Activated CD4-positive, alpha-beta memory T cell treated with anti-CD3 and anti-CD28 coated beads for 36 hours (primary cell): ENCODE measurements at regions of chr19 and their contacts with region 1.

Region 1: GRCh38 chr19:45862564-45863334 is at the start of gene SYMPK:
- DNase-seq: peak; percentile 99
- H3K4me3 Mint-ChIP-seq: peak within 1 kb of the TSS; percentile 94
- H3K27ac Mint-ChIP-seq: peak within 1 kb of the TSS; percentile 93
- H3K4me1 Mint-ChIP-seq: peaks cover 23% of the 10 kb centered on the region
- H3K27me3 Mint-ChIP-seq: peaks cover 20% of the 10 kb centered on the region
- total RNA-seq, gene SYMPK: 87.8 to 91.6 TPM

Region 2: GRCh38 chr19:45584332-45585157 is 278.2 kb before region 1 on chr19 and contains the start of gene OPA3:
- CTCF ChIA-PET with region 1: no interaction called
- POLR2A ChIA-PET with region 1: no interaction called
- intact Hi-C with region 1: loop called (anchors 10 kb)
- DNase-seq: peak; percentile 100
- H3K4me3 Mint-ChIP-seq: peak within 1 kb of the TSS; percentile 96
- H3K27ac Mint-ChIP-seq: peak within 1 kb of the TSS; percentile 97
- H3K4me1 Mint-ChIP-seq: peaks cover 11% of the 10 kb centered on the region
- H3K27me3 Mint-ChIP-seq: peaks cover 1% of the 10 kb centered on the region
- total RNA-seq, gene OPA3: 10.8 to 11.0 TPM

Region 3: DNA sequence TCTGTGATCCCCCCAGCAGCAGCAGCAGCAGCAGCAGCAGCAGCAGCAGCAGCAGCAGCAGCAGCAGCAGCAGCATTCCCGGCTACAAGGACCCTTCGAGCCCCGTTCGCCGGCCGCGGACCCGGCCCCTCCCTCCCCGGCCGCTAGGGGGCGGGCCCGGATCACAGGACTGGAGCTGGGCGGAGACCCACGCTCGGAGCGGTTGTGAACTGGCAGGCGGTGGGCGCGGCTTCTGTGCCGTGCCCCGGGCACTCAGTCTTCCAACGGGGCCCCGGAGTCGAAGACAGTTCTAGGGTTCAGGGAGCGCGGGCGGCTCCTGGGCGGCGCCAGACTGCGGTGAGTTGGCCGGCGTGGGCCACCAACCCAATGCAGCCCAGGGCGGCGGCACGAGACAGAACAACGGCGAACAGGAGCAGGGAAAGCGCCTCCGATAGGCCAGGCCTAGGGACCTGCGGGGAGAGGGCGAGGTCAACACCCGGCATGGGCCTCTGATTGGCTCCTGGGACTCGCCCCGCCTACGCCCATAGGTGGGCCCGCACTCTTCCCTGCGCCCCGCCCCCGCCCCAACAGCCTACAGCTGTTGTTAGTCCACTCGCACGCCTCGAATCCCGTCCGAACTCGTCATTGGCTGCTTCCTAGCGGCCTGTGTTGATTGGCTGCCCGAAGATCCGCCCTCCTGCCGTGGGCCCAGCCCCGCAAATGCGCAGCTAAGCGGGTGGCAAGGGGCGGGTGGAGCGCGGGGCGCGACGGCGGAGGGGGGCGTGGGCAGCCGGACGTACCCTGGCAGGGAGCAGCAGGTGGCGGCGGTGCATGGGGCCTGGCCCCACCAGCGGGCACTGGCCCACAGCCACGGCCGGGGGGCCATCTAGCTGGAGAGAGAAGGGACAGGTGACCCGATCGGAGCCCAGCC is 92.3 kb before region 1 on chr19:
- CTCF ChIA-PET with region 1: interaction called, 10 read pairs
- POLR2A ChIA-PET with region 1: no interaction called
- intact Hi-C with region 1: loop called (anchors 1 kb)
- DNase-seq: peak; percentile 92
- H3K4me3 Mint-ChIP-seq: peak overlapping the region; percentile 78
- H3K27ac Mint-ChIP-seq: peak overlapping the region; percentile 28
- H3K4me1 Mint-ChIP-seq: peaks cover 10% of the 10 kb centered on the region
- H3K27me3 Mint-ChIP-seq: peaks cover 9% of the 10 kb centered on the region

Region 4: GRCh38 chr19:45817010-45817724 is 45.6 kb before region 1 on chr19:
- CTCF ChIA-PET with region 1: interaction called, 11 read pairs
- POLR2A ChIA-PET with region 1: no interaction called
- intact Hi-C with region 1: loop called (anchors 5 kb)
- DNase-seq: peak; percentile 97
- H3K4me3 Mint-ChIP-seq: peak overlapping the region; percentile 12
- H3K27ac Mint-ChIP-seq: peak overlapping the region; percentile 13
- H3K4me1 Mint-ChIP-seq: no peaks in the 10 kb centered on the region
- H3K27me3 Mint-ChIP-seq: no peaks in the 10 kb centered on the region

Region 5: DNA sequence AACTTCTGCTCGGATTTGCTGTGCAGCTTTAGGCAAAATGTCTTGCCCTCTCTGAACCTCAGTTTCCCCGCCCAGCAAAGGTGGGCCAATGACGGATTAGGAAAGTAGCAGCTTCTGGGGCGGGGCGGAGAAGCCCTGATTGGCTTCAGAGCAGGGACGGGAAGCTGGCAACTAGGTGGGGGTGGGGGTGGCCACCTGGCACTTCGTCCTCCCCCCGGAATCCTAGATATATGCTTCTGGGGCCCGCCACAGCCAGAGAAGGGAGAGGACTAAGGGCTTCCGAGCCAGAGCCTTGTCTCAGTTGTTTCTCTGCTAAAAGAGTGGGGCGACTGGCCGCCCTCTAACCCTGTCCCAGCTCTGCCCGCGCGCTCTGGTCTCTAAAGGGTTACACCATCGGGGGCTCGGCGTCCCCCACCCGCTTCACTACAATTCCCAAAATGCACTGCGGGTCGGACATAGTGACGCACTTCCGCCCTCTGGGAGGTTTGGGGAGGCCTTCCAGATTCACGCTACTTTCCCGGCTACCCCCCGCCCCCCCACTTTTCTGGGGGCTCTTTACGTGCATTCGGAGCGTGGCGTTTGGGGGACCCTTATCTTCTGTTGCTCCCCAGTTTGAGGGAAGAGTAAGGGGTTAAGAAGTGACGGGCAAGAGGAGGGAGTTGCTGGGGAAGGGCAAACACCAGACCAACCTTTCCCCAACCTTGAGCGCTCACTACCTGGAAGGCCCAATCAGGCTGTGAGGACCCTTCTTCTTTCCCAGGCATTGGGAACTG is 23.9 kb after region 1 on chr19:
- CTCF ChIA-PET with region 1: interaction called, 106 read pairs
- POLR2A ChIA-PET with region 1: interaction called, 16 read pairs
- intact Hi-C with region 1: loop called (anchors 1 kb)
- DNase-seq: peak; percentile 95
- H3K4me3 Mint-ChIP-seq: peak overlapping the region; percentile 85
- H3K27ac Mint-ChIP-seq: peak overlapping the region; percentile 92
- H3K4me1 Mint-ChIP-seq: peaks cover 22% of the 10 kb centered on the region
- H3K27me3 Mint-ChIP-seq: no peaks in the 10 kb centered on the region

Region 6: DNA sequence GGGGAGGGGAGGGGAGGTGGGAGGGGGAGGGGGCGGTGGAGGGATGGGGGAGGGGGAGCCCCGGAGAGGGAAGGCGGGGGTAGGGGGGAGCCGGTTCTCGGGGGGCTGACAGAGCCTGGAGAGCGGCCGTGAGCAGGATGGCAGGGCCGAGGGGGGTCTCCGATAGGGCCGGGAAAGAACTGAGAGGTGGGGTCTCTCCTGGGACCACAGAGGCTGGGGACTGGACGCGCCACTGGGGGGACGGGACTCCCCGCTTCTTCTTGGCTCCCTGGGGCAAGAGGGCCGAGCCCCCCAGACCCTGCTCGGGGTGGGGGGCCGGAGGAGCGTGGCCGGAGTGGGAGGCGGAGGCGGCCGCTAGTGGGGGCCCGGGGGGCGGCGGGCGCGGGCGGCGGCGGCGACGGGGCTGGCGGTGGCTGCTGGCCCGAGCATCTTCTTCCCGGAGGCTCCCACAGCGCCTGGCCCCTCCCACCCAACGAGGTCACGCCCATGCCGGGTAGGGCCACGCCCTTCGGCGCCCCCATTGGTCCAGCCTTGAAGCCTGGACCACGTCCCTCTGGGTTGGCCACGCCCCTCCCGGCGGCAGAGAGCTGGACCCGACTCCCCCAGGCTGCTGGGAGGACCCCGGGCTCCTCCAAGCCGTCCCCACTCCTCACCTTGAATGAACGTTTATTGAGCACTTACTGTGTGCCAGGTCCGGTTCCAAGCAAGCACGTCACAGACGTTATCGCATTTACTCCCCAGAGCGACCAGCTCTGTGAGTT is 111.0 kb after region 1 on chr19 and contains the start of gene NOVA2:
- CTCF ChIA-PET with region 1: no interaction called
- POLR2A ChIA-PET with region 1: no interaction called
- intact Hi-C with region 1: no loop called
- DNase-seq: peak; percentile 60
- H3K4me3 Mint-ChIP-seq: no peak within 1 kb of the TSS
- H3K27ac Mint-ChIP-seq: no peak within 1 kb of the TSS
- H3K4me1 Mint-ChIP-seq: peaks cover 12% of the 10 kb centered on the region
- H3K27me3 Mint-ChIP-seq: peaks cover 55% of the 10 kb centered on the region
- total RNA-seq, gene NOVA2: not detected

Region 7: GRCh38 chr19:45994989-45995714 is 132.4 kb after region 1 on chr19 and contains the start of gene CCDC61:
- CTCF ChIA-PET with region 1: interaction called, 5 read pairs
- POLR2A ChIA-PET with region 1: no interaction called
- intact Hi-C with region 1: loop called (anchors 1 kb)
- DNase-seq: peak; percentile 97
- H3K4me3 Mint-ChIP-seq: no peak within 1 kb of the TSS
- H3K27ac Mint-ChIP-seq: no peak within 1 kb of the TSS
- H3K4me1 Mint-ChIP-seq: peaks cover 17% of the 10 kb centered on the region
- H3K27me3 Mint-ChIP-seq: peaks cover 5% of the 10 kb centered on the region
- total RNA-seq, gene CCDC61: 28.4 to 30.5 TPM